OCI-LY7 (cell line): ENCODE measurements at regions of chr10 and their contacts with region 1.

Region 1: DNA sequence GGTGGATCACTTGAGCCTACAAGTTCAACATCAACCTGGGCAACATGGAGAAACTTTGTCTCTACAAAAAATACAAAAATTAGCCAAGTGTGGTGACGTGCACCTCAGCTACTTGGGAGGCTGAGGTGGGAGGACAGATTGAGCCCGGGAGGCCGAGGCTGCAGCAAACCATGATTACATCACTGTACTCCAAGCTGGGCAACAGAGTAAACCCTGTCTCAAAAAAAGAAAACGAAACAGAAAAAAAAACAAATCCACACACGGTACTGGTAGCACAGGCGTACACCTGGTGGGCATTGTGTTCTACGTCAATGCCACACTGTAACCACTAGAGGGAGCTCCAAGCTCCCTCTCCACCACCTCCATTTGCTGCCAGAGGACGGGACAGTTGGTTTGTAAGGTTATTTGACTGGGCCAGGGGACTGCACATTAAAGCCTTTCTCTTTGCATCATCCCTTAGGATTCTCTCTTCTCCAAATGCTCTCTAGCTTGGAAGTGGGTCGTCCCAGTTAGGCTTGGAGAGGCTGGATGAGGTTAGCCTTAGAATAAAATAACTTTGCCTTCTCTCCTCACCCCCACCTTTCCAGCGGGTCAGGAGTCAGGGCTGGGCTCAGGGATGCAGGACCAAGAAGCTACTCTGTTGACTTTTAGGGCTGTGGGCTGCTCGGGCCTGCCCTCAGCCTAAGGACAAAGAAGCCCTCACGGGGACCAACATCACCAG is 130.8 kb downstream of the SORBS1 start:
- DNase-seq: peak; percentile 66
- H3K4me3 ChIP-seq: no peak overlapping the region
- H3K27ac ChIP-seq: no peak overlapping the region
- H3K4me1 ChIP-seq: no peaks in the 10 kb centered on the region
- CTCF ChIP-seq: peak; percentile 93

Region 2: GRCh38 chr10:95236068-95236903 is 194.1 kb before region 1 on chr10:
- CTCF ChIA-PET with region 1: interaction called, 13 read pairs
- POLR2A ChIA-PET with region 1: no interaction called
- intact Hi-C with region 1: no loop called
- DNase-seq: peak; percentile 79
- H3K4me3 ChIP-seq: peak overlapping the region; percentile 37
- H3K27ac ChIP-seq: peak overlapping the region; percentile 96
- H3K4me1 ChIP-seq: peaks cover 55% of the 10 kb centered on the region
- CTCF ChIP-seq: peak; percentile 33; the same call in 1 of the 2 replicates

Region 3: GRCh38 chr10:95279042-95279820 is 151.2 kb before region 1 on chr10:
- CTCF ChIA-PET with region 1: no interaction called
- POLR2A ChIA-PET with region 1: no interaction called
- intact Hi-C with region 1: no loop called
- DNase-seq: no peak
- H3K4me3 ChIP-seq: no peak overlapping the region
- H3K27ac ChIP-seq: no peak overlapping the region
- H3K4me1 ChIP-seq: peaks cover 9% of the 10 kb centered on the region
- CTCF ChIP-seq: no peak

Region 4: DNA sequence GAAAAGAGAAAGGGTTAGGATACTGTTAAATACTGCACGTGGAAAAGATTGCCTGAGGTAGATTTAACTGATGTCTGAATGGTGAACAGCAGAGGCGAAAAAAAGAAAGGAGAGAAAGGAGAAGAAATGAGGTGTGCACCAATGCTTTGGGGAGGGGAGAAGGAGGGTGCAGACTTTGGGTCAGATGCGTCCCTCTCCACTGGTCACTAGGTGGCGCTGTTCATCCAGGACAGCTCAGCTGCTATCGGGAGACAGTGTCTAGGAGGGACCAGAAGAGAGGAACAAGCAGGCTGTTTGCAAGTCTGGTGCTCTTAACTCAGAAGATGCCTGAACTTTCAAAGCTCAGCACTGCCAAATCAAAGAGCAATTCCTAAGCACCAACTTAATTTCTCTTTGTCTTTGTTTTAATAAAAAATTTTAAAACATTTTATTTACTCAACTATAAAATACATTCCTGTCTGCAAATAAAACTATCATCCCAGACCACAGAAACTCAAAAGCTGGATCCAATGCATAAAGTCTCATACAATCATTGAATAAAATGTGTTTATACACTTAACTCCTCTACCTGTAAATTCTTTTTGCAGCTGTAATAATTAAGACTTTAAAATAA is 55.7 kb before region 1 on chr10:
- CTCF ChIA-PET with region 1: interaction called, 5 read pairs
- POLR2A ChIA-PET with region 1: no interaction called
- intact Hi-C with region 1: loop called (anchors 5 kb)
- DNase-seq: peak; percentile 83
- H3K4me3 ChIP-seq: no peak overlapping the region
- H3K27ac ChIP-seq: no peak overlapping the region
- H3K4me1 ChIP-seq: no peaks in the 10 kb centered on the region
- CTCF ChIP-seq: peak; percentile 95

Region 5: GRCh38 chr10:95601116-95601719 is 170.8 kb after region 1 on chr10:
- CTCF ChIA-PET with region 1: interaction called, 3 read pairs
- POLR2A ChIA-PET with region 1: interaction called, 4 read pairs
- intact Hi-C with region 1: loop called (anchors 1 kb)
- DNase-seq: peak; percentile 68
- H3K4me3 ChIP-seq: no peak overlapping the region
- H3K27ac ChIP-seq: no peak overlapping the region
- H3K4me1 ChIP-seq: no peaks in the 10 kb centered on the region
- CTCF ChIP-seq: peak; percentile 95

Region 6: DNA sequence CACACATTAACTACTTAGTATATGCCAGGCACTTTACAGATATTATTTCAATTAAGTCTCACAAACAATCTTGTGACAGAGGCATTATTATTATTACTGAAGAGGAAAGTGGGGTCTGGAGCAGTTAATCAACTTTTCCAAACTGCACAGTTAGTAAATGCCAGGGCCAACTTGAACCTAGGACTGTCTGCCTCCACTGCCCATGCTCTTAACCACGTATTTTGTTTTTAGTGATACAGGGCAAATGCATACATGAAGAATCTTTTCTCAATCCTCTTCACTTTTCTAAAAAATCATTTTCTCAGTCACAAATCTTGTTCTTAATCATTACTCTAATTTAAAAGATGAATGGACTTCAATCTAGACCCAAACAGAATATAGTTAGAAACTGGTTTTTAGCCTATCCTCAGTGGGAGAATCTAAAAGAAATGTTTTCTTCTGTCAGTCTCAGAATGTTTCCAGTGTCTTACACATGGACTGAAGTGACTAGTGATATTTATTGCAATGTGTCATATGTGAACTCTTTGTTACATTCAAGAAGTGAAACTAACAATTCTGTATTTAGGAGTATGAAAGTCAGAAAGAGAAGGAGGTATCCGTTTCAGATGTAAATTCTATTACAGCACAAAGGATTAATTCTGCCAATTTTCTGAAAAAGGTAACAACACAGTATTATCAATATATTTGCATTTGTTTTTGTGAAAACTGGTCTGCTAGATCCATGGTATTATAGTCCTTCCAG is 557.5 kb after region 1 on chr10:
- CTCF ChIA-PET with region 1: no interaction called
- POLR2A ChIA-PET with region 1: no interaction called
- intact Hi-C with region 1: loop called (anchors 1 kb)
- DNase-seq: peak; percentile 55
- H3K4me3 ChIP-seq: peak overlapping the region; percentile 24
- H3K27ac ChIP-seq: peak overlapping the region; percentile 74
- H3K4me1 ChIP-seq: peaks cover 34% of the 10 kb centered on the region
- CTCF ChIP-seq: no peak